PC-9 (cell line): ENCODE measurements at regions of chr1 and their contacts with region 1.

Region 1: DNA sequence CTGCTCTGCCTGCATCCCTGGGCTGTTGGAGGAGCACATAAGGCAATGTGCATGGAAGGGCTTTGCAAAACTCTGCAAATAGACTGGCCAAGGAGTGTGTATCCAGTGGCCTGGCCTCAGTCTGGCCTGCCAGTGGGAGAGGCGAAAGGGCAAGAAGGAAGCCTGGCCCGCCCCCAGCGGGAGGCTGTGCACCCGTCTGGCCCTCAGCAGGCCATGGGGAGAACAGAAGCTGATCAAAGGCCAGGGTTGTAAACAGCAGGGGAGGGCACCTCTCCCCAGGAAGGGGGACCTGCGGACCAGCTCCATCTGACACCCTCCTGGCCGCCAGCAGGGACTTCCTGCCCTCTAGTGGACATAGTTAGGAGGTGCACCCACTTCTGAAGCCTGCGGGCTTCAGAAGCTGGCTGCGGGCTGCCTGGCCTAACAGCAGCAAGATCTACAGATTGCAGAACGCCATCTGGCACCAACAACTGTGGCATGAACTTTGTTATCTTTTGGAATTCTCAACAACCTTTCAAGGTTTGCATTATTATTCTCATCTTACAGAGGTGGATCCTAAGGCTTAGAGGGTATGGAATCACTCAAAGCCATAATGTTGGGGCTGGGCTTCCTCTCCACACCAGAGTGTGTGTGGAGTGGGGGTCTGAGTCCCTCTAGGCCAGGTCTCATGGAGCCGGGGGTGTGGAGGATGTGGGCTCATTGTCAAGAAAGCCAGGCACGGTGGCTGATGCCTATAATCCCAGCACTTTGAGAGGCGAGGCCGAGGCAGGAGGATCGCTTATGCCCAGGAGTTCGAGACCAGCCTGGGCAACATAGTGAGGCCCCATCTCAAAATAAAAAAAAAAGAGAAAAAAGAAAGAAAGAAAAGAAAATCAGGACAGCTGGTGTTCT is 18.9 kb upstream of the CDK18 start:
- DNase-seq: peak; percentile 73 to 74
- H3K4me3 ChIP-seq: no peak overlapping the region
- H3K27ac ChIP-seq: no peak overlapping the region
- H3K4me1 ChIP-seq: no peaks in the 10 kb centered on the region
- H3K27me3 ChIP-seq: no peaks in the 10 kb centered on the region
- CTCF ChIP-seq: peak; percentile 97

Region 2: DNA sequence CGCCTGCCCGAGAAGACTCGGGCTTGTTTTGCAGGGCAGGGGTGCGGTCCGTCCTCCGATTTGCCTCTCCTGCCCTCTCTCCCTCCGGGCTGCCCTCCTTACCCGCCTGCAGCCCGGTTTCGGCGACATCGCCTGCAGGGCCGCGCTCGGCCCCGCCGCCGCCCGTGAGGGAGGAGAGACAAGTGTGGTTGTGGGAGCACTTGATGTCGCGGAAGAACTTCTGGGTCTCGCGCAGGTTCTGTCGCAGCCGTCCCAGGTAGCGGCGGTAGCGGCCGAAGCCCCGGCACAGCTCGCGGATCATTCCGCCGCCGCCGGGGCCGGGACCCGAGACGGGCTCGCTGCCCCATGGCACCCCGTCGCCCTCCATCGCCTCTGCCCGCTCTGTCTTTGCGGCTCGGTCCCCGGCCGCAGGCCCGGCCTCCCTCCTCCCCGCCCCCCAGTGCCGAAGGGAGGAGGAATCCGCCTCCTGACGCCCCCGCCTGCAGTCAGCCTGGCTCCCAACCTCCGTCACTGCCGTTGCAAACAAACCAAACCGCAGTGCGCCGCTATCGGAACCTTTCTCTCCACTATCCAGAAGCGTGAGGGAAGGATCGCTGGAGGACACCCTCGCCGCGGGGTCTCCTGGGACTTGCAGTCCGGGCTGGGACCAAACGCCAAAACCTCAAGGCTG is 274.3 kb before region 1 on chr1 and contains the start of gene DSTYK:
- CTCF ChIA-PET with region 1: no interaction called
- POLR2A ChIA-PET with region 1: no interaction called
- intact Hi-C with region 1: no loop called
- DNase-seq: peak; percentile 84 to 92
- H3K4me3 ChIP-seq: peak within 1 kb of the TSS; percentile 85
- H3K27ac ChIP-seq: peak within 1 kb of the TSS; percentile 46; the same call in 1 of the 2 replicates
- H3K4me1 ChIP-seq: peaks cover 10% of the 10 kb centered on the region
- H3K27me3 ChIP-seq: no peaks in the 10 kb centered on the region
- CTCF ChIP-seq: no peak
- total RNA-seq, gene DSTYK: 8.1 and 10.5 TPM in 2 replicates

Region 3: DNA sequence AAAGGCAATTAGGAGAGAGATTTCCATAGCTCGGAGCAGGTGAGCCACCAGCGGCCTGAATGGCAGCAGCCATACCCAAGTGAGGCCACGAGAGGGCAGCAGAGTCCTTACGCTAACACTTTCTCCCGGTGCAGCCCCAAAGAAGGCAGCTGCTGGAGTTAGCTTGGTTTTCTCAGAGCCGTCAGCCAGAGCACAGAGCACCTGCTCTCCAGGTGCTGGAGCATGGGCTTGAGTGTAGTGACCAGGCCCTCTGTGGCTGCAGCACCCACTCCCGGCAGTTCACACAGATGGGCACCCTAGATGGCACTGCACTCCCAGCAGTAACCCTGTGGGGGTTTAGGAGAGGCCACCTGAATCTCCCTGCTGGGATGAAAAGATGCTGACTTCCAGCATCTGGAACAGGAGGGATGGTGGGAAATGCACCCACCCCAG is 212.0 kb before region 1 on chr1:
- CTCF ChIA-PET with region 1: interaction called, 8 read pairs
- POLR2A ChIA-PET with region 1: interaction called, 6 read pairs
- intact Hi-C with region 1: loop called (anchors 1 kb)
- DNase-seq: peak; percentile 67 to 83
- H3K4me3 ChIP-seq: no peak overlapping the region
- H3K27ac ChIP-seq: no peak overlapping the region
- H3K4me1 ChIP-seq: peaks cover 5% of the 10 kb centered on the region
- H3K27me3 ChIP-seq: no peaks in the 10 kb centered on the region
- CTCF ChIP-seq: peak; percentile 97

Region 4: DNA sequence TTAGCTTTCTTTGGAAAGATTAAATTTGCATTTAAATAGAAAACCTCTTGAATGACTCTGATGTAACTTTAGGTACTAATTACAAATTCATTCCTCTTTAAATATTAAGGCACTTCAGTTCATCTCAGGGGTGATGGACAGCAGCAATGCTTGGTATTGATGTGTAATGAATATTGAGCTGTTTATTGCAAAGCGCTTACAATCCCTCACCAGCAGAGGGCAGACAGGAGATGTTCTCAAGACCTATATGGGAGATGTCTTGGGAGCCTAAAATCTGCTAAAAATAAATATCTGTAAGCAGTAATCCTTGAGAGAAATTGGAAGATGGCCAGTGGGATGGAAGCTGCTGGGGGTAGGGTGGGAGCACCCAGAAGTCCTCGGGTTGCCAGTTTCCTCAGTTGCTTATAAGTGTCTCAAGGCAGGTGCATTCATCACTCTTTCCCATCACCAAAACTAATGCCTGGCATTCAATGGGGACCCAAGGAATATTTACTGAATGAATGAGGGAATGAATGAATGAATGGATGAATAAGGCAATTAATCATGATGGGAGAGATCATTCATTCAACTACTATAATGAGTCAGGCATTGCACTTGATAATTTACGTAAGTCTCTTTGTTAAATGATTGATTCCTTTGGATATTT is 131.2 kb before region 1 on chr1:
- CTCF ChIA-PET with region 1: interaction called, 17 read pairs
- POLR2A ChIA-PET with region 1: no interaction called
- intact Hi-C with region 1: no loop called
- DNase-seq: peak; percentile 43
- H3K4me3 ChIP-seq: no peak overlapping the region
- H3K27ac ChIP-seq: no peak overlapping the region
- H3K4me1 ChIP-seq: 0 out of 2 replicates have a peak, but pooled peaks cover 2% of the 10 kb centered on the region
- H3K27me3 ChIP-seq: peaks cover 26% of the 10 kb centered on the region
- CTCF ChIP-seq: peak; percentile 86

Region 5: GRCh38 chr1:205416322-205416721 is 69.3 kb before region 1 on chr1:
- CTCF ChIA-PET with region 1: interaction called, 18 read pairs
- POLR2A ChIA-PET with region 1: no interaction called
- intact Hi-C with region 1: no loop called
- DNase-seq: no peak
- H3K4me3 ChIP-seq: no peak overlapping the region
- H3K27ac ChIP-seq: no peak overlapping the region
- H3K4me1 ChIP-seq: no peaks in the 10 kb centered on the region
- H3K27me3 ChIP-seq: peaks cover 28% of the 10 kb centered on the region; the same call in 1 of the 2 replicates
- CTCF ChIP-seq: no peak

Region 6: GRCh38 chr1:205440476-205441317 is 44.9 kb before region 1 on chr1:
- CTCF ChIA-PET with region 1: interaction called, 13 read pairs
- POLR2A ChIA-PET with region 1: interaction called, 3 read pairs
- intact Hi-C with region 1: no loop called
- DNase-seq: peak in 1 of 2 experiments; percentile 86
- H3K4me3 ChIP-seq: no peak overlapping the region
- H3K27ac ChIP-seq: peak overlapping the region; percentile 85
- H3K4me1 ChIP-seq: peaks cover 46% of the 10 kb centered on the region
- H3K27me3 ChIP-seq: no peaks in the 10 kb centered on the region
- CTCF ChIP-seq: no peak

Region 7: DNA sequence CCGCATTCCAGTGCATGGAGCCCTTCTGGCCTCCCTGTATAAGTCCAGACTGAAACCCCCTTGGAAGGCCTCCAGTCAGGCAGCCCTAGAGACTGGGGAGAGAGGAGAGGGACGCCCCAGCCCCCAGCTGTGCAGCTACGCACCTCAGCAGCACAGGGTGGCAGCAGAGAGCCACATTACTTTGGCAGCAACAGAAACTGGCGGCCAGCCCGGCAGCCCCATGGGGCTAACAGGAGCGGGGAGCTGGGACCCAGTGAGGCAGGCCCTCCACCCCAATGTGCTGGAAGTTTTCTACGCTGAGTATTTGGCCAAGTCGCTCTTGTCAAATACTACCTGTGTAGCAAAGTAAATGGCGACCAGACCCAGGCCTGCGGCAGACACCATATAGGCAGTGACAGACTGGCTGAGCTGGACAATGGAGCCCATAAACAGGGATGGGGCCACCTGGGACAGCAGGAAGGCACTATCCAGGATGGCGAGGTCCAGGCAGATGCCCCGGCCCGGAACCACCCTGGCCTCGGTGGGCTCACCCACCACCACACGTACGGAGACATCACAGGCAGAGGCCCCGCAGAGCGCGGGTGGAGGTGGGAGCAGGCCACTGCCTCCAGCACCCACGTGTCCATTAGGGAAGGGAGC is 173.5 kb after region 1 on chr1:
- CTCF ChIA-PET with region 1: interaction called, 6 read pairs
- POLR2A ChIA-PET with region 1: no interaction called
- intact Hi-C with region 1: loop called (anchors 2 kb)
- DNase-seq: peak in 1 of 2 experiments; percentile 74
- H3K4me3 ChIP-seq: no peak overlapping the region
- H3K27ac ChIP-seq: no peak overlapping the region
- H3K4me1 ChIP-seq: peaks cover 27% of the 10 kb centered on the region
- H3K27me3 ChIP-seq: no peaks in the 10 kb centered on the region
- CTCF ChIP-seq: peak; percentile 92

Region 8: DNA sequence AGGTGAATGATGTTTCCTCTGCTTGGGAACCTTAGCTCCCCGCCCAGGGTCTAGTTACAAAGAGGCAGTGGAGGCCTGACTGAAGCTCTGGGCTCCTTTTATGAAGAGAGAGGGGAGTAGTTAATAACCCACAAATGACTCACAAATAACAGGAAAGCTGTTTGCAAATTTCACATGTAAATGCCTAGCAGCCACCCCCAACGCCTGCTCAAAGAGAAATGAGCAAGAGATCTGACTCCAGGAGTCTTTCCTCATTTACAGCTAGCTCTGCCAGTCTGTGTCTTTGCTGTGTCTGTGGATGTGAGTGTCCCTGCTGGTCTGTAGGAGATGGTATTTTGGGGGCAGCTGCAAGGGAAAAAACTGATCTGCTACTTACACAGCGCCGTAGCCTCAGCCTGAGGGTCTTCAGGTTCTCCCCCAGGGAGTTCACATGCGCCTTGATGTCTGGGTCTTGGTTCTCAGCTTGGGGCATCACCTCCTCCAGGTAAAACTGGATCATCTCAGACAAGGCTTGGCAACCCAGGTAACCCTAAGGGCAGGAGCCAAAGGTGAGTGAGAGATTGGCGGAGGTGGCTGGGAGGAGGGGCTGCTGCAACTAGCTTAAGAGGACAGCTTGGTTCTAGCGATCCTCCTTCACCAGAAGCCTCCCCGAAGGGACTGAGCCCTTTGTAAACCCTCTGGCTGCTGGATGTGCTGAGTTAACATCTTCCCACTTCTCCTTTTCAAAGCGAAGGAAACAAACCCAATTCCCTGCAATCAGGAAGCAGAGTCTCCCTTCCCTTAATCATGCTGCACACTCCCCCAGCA is 1285.2 kb after region 1 on chr1 and contains the start of gene IL19:
- CTCF ChIA-PET with region 1: no interaction called
- POLR2A ChIA-PET with region 1: no interaction called
- intact Hi-C with region 1: no loop called
- DNase-seq: peak in 1 of 2 experiments; percentile 41
- H3K4me3 ChIP-seq: no peak within 1 kb of the TSS
- H3K27ac ChIP-seq: no peak within 1 kb of the TSS
- H3K4me1 ChIP-seq: no peaks in the 10 kb centered on the region
- H3K27me3 ChIP-seq: peaks cover 9% of the 10 kb centered on the region; the same call in 1 of the 2 replicates
- CTCF ChIP-seq: no peak
- total RNA-seq, gene IL19: not detected in 2 replicates